GM12878 (cell line): ENCODE measurements at regions of chrX and their contacts with region 1.

Region 1: GRCh38 chrX:142938793-142939192 is 86.9 kb upstream of the SPANXN4 start:
- DNase-seq: no peak
- ATAC-seq: no peak
- H3K4me3 ChIP-seq: no peak overlapping the region
- H3K27ac ChIP-seq: no peak overlapping the region
- H3K4me1 ChIP-seq: no peaks in the 10 kb centered on the region
- H3K27me3 ChIP-seq: no peaks in the 10 kb centered on the region
- CTCF ChIP-seq: no peak
- EP300 ChIP-seq: no peak
- POLR2A ChIP-seq: no peak
- RAD21 ChIP-seq: no peak

Region 2: DNA sequence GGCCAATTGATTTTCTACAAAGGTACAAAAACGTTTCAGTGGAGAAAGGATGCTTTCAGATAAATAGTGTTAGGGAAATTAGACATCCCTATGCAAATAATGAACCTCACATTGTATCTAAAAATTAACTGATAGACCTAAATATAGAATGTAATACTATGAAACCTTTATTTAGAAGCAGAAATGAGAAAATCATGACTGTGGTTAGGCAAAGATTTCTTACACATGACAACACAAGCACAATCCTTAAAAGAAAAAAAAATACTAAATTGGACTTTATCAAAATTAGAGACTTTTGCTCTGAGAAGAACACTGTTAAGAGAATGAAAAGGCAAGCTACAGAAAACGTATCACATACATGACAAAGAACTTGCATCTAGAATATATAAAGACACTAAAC is 43.9 kb after region 1 on chrX:
- CTCF ChIA-PET with region 1: no interaction called
- POLR2A ChIA-PET with region 1: no interaction called
- RAD21 ChIA-PET with region 1: no interaction called
- SMC1A ChIA-PET with region 1: no interaction called
- in situ Hi-C with region 1: loop called (anchors 5 kb)
- intact Hi-C with region 1: no loop called
- DNase-seq: no peak
- ATAC-seq: peak; percentile 18
- H3K4me3 ChIP-seq: no peak overlapping the region
- H3K27ac ChIP-seq: no peak overlapping the region
- H3K4me1 ChIP-seq: peaks cover 16% of the 10 kb centered on the region
- H3K27me3 ChIP-seq: no peaks in the 10 kb centered on the region
- CTCF ChIP-seq: no peak
- EP300 ChIP-seq: peak in 1 of 2 experiments; percentile 80; a peak in 2 of 4 replicates
- POLR2A ChIP-seq: no peak
- RAD21 ChIP-seq: no peak